ENCODE measurements at regions of chr17 and their contacts with region 1.

Region 1: DNA sequence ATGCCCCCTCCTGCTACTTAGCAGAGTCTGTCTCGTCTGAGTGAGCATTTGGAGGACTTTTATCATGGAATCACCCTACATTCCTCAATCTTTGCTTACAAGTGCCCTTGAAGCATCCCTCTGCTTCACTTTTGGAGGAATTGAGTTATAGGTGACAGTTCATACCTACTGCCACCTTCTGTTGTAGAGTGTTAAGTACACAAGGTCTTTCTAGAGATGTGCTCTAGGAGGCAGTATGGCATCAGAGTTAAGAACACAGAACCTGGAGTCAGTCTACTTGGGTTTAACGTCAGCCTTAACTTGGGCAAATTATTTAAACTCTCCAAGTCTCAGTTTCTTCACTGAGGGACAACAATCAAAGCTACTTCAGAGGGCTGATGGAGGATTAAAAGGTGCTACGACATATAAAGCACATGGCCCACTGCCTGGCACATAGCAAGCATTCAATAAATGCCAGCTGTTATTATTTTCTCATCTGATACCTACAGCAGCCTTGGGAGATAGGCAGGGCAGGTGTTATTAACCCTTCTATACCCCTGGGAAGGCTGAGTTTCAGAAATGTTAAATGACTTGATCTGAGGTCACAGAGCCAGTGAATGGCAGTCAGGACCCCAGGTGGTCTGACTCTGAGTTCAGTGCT is 62.2 kb downstream of the UTP18 start:
- DNase-seq: peak; percentile 24 to 60 (median 33)
- ATAC-seq: peak; percentile 99
- H3K4me3 ChIP-seq: no peak overlapping the region
- H3K27ac ChIP-seq: no peak overlapping the region
- H3K4me1 ChIP-seq: no peaks in the 10 kb centered on the region
- H3K27me3 ChIP-seq: peaks cover 3 to 4% of the 10 kb centered on the region in 2 experiments; a peak in 2 of 5 replicates
- CTCF ChIP-seq: peak; percentile 83 to 100 (median 99)
- EP300 ChIP-seq: no peak
- POLR2A ChIP-seq: no peak
- RAD21 ChIP-seq: peak; percentile 79 to 94

Region 2: GRCh38 chr17:51365090-51365489 is 42.6 kb after region 1 on chr17:
- CTCF ChIA-PET with region 1: no interaction called
- POLR2A ChIA-PET with region 1: no interaction called
- in situ Hi-C with region 1: no loop called
- intact Hi-C with region 1: loop called (anchors 5 kb)
- DNase-seq: peak in 2 of 4 experiments; percentile 47 to 64
- ATAC-seq: peak; percentile 82
- H3K4me3 ChIP-seq: no peak overlapping the region
- H3K27ac ChIP-seq: no peak overlapping the region; the same call in 2 of the 3 replicates
- H3K4me1 ChIP-seq: peaks cover 0 to 10% of the 10 kb centered on the region in 2 experiments; a peak in 4 of 5 replicates
- H3K27me3 ChIP-seq: peaks cover 3 to 6% of the 10 kb centered on the region in 2 experiments; a peak in 3 of 5 replicates
- CTCF ChIP-seq: no peak
- EP300 ChIP-seq: no peak
- POLR2A ChIP-seq: no peak
- RAD21 ChIP-seq: no peak

Region 3: GRCh38 chr17:51461578-51462004 is 139.1 kb after region 1 on chr17:
- CTCF ChIA-PET with region 1: no interaction called
- POLR2A ChIA-PET with region 1: no interaction called
- in situ Hi-C with region 1: no loop called
- intact Hi-C with region 1: loop called (anchors 10 kb)
- DNase-seq: peak; percentile 65 to 79 (median 73)
- ATAC-seq: peak; percentile 98
- H3K4me3 ChIP-seq: no peak overlapping the region
- H3K27ac ChIP-seq: no peak overlapping the region
- H3K4me1 ChIP-seq: no peaks in the 10 kb centered on the region; a peak in 1 of 5 replicates
- H3K27me3 ChIP-seq: no peaks in the 10 kb centered on the region
- CTCF ChIP-seq: peak; percentile 80 to 90 (median 82)
- EP300 ChIP-seq: no peak
- POLR2A ChIP-seq: no peak
- RAD21 ChIP-seq: peak in 1 of 2 experiments; percentile 57; a peak in 3 of 4 replicates

Region 4: GRCh38 chr17:51540151-51540550 is 217.6 kb after region 1 on chr17:
- CTCF ChIA-PET with region 1: interaction called, 5 read pairs
- POLR2A ChIA-PET with region 1: no interaction called
- in situ Hi-C with region 1: no loop called
- intact Hi-C with region 1: loop called (anchors 5 kb)
- DNase-seq: peak in 2 of 4 experiments; percentile 7 to 8
- ATAC-seq: peak; percentile 58; the same call in 2 of the 3 replicates
- H3K4me3 ChIP-seq: no peak overlapping the region
- H3K27ac ChIP-seq: no peak overlapping the region
- H3K4me1 ChIP-seq: no peaks in the 10 kb centered on the region
- H3K27me3 ChIP-seq: no peaks in the 10 kb centered on the region
- CTCF ChIP-seq: peak; percentile 31 to 48 (median 40); a peak in 4 of 6 replicates
- EP300 ChIP-seq: no peak
- POLR2A ChIP-seq: no peak
- RAD21 ChIP-seq: peak; percentile 52 to 53

Measured in K562 (cell line).